PC-3 (cell line): ENCODE measurements at regions of chr4 and their contacts with region 1.

Region 1: DNA sequence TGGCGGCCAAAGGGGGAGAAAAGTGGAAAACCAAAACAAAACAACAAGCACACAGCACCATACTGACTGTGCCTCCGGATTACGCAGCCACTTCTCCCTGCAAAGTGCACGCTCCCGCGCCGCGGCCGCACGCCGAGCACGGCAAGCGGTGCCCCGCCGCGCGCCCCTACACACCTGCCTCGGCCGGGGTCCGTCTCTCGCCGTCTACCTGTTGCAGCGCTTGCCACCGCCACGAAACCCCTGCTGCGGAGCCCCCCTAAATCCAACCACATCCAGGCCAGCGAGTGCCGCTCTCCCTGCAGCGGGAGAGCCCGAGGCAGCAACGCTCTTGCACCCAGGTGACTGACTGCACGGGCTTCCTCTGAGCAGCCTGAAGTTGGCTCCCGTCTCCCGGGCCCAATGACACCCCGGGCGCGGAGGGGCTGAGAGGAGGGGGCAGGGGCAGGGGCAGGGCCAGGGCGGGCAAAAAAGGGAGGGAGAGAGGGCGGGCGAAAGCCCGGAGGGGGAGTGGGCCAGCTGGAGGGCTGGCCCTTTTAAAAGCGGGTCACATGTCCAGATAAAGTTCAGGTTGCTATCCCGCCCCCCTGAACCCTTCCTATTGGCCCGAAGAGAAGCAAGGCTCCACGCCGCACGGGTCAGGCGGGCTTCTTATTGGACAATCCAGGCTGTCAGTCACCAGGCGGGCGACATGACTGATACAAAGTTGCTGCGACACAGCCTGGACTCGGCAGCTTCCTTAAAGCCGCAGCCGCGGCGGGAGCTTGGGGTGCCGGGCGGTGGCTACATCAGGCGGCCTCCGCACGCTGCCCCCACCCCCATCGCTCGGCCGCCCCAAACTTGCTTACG is at the start of gene NR3C2:
- DNase-seq: peak; percentile 95
- ATAC-seq: peak; percentile 84
- H3K4me3 ChIP-seq: peak within 1 kb of the TSS; percentile 86
- H3K27ac ChIP-seq: no peak within 1 kb of the TSS
- H3K4me1 ChIP-seq: peaks cover 13% of the 10 kb centered on the region; the same call in 1 of the 2 replicates
- H3K27me3 ChIP-seq: no peaks in the 10 kb centered on the region
- CTCF ChIP-seq: no peak
- total RNA-seq, gene NR3C2: 1.2 and 2.8 TPM in 2 replicates

Region 2: DNA sequence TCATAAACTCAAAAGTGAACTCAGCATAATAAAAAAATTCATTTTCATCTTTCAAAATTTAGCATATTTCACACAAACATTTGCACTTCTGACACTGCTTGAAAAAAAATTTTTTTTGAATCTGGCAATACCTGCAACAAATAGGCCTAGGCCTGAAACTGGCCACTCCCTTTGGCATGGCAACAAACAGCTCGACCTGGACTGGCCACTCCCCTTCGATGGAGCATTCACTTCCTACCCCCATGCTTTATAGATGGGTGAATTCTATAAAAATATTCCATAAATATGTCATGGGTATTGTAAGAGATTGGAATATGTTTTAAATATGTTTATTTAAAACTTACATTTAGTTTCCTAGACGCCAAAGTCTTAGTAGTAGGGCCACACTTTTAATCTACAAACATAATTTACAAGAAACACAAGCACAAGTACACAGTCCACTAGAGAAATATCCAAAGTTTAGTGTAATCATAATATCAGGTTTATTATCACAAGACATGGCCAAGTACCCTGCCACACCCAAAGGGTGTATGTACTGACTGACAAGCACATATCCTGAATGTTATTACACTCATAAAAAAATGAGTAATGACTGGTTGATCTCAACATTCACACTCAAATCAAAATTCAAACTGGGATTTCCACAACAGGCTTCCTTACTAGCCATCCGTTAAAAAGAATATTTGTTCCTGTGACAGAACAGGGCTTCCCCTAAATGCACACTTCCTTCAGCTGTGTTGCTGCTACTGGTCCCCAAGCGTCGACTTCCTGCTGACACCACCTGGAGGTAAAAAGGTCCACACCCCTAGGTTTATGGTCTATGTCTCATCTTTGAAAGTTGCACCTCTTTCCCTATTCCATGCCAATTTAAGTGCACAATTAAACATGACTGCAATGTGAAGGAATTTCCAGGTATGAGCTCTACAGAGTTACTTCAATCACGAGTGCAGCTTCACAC is 271.5 kb before region 1 on chr4:
- CTCF ChIA-PET with region 1: no interaction called
- POLR2A ChIA-PET with region 1: interaction called, 3 read pairs
- intact Hi-C with region 1: loop called (anchors 2 kb)
- DNase-seq: peak; percentile 69
- ATAC-seq: peak; percentile 84
- H3K4me3 ChIP-seq: no peak overlapping the region; the same call in 1 of the 2 replicates
- H3K27ac ChIP-seq: peak overlapping the region; percentile 87
- H3K4me1 ChIP-seq: peaks cover 22% of the 10 kb centered on the region
- H3K27me3 ChIP-seq: no peaks in the 10 kb centered on the region
- CTCF ChIP-seq: no peak

Region 3: GRCh38 chr4:148674876-148675275 is 232.7 kb after region 1 on chr4:
- CTCF ChIA-PET with region 1: no interaction called
- POLR2A ChIA-PET with region 1: no interaction called
- intact Hi-C with region 1: loop called (anchors 5 kb)
- DNase-seq: peak; percentile 56
- ATAC-seq: peak; percentile 81
- H3K4me3 ChIP-seq: no peak overlapping the region
- H3K27ac ChIP-seq: 0 out of 2 replicates have a peak overlapping the region, but pooled peaks have one; percentile 43
- H3K4me1 ChIP-seq: no peaks in the 10 kb centered on the region
- H3K27me3 ChIP-seq: no peaks in the 10 kb centered on the region
- CTCF ChIP-seq: no peak

Region 4: GRCh38 chr4:148686449-148686848 is 244.2 kb after region 1 on chr4:
- CTCF ChIA-PET with region 1: no interaction called
- POLR2A ChIA-PET with region 1: no interaction called
- intact Hi-C with region 1: no loop called
- DNase-seq: no peak
- ATAC-seq: no peak
- H3K4me3 ChIP-seq: no peak overlapping the region
- H3K27ac ChIP-seq: no peak overlapping the region
- H3K4me1 ChIP-seq: no peaks in the 10 kb centered on the region
- H3K27me3 ChIP-seq: no peaks in the 10 kb centered on the region
- CTCF ChIP-seq: no peak

Region 5: DNA sequence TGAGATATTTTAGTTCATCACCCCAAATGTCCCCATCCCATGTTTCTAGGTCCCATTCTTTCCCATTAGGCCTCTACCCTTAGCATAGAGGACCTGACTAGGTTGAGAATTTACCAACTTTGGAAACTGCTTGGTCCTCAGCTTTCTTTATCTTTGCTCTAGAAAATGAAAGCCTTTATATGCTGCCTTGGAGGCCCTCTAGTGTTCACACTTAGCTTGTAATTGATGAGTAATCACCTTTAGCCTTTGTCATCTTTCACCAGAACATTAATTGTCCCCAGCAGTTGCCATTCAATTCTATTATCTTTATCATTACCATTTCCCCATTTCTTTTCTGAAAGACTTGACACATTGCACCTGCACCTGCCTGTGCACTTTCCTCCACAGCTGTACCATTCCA is 589.2 kb after region 1 on chr4:
- CTCF ChIA-PET with region 1: no interaction called
- POLR2A ChIA-PET with region 1: no interaction called
- intact Hi-C with region 1: loop called (anchors 5 kb)
- DNase-seq: peak; percentile 32
- ATAC-seq: peak; percentile 35
- H3K4me3 ChIP-seq: no peak overlapping the region
- H3K27ac ChIP-seq: no peak overlapping the region
- H3K4me1 ChIP-seq: no peaks in the 10 kb centered on the region
- H3K27me3 ChIP-seq: no peaks in the 10 kb centered on the region
- CTCF ChIP-seq: peak; percentile 60